BJ (cell line): ENCODE measurements at regions of chr1 and their contacts with region 1.

Region 1: DNA sequence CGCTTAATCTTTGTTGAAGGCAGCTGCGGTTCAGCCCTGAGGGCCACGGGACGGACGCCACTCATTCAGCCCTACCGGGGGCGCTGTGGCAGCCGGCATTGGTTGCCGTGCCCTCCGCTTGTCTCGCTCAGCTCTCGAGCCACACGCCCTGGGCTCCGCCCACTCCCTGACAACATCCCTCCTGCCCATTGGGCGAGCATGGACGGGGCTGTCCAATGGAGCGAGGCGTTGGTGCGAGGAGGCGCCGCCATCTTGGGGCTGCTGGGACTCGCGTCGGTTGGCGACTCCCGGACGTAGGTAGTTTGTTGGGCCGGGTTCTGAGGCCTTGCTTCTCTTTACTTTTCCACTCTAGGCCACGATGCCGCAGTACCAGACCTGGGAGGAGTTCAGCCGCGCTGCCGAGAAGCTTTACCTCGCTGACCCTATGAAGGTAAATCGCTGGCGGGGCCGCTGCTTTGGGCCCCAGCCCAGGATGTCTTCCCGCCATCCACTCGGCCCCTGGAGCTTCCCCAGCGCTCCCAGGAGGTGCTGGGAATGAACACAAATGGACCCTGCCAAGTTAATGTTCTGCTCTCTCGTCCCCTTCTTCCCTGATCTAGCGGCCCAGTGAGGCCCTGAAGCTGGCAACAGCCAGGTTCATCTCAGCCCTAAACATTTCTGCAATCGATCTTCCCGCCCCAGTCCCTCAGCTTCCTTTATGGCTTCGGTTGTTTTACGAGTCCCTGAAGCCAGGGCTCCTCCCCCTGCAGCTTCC is at the start of gene SRP9:
- DNase-seq: peak; percentile 88
- H3K4me3 ChIP-seq: peak within 1 kb of the TSS; percentile 87
- H3K27me3 ChIP-seq: no peaks in the 10 kb centered on the region
- CTCF ChIP-seq: peak; percentile 96
- polyA plus RNA-seq, gene SRP9: 250 and 272 TPM in 2 replicates

Region 2: DNA sequence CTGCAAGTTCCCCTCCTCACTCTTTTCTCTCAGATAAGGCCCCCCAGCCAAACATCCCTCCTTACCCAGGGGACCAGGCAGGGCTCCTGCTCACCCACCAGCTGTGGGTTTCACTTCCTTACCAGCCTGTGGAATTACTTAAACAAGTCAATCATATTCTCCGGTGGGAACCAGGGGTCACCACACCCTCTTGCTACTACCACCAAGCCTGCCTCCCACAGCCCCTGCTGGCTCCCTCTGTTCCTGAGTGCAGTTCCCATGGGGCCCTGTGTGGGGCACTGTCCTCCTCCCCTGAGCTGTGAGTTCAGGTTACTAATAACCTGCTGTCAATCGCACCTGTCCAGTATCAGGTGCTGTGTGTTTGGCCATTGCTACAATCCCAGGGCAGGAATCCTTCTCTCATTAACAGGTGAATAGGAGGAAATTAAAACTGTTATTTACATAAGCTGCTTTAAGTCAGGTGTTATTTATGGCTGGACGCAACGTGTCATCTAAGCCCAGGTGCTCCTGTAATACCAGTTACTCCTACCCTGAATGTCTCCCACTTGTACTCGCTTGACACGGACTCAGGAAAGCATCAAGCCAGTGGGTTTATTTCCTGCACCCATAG is 296.8 kb before region 1 on chr1:
- CTCF ChIA-PET with region 1: interaction called, 231 read pairs
- POLR2A ChIA-PET with region 1: interaction called, 3 read pairs
- DNase-seq: no peak
- H3K4me3 ChIP-seq: no peak overlapping the region
- H3K27me3 ChIP-seq: no peaks in the 10 kb centered on the region
- CTCF ChIP-seq: peak; percentile 80

Region 3: GRCh38 chr1:225766967-225767633 is 10.7 kb before region 1 on chr1:
- CTCF ChIA-PET with region 1: interaction called, 20 read pairs
- POLR2A ChIA-PET with region 1: interaction called, 11 read pairs
- DNase-seq: peak; percentile 69
- H3K4me3 ChIP-seq: no peak overlapping the region
- H3K27me3 ChIP-seq: no peaks in the 10 kb centered on the region
- CTCF ChIP-seq: no peak

Region 4: DNA sequence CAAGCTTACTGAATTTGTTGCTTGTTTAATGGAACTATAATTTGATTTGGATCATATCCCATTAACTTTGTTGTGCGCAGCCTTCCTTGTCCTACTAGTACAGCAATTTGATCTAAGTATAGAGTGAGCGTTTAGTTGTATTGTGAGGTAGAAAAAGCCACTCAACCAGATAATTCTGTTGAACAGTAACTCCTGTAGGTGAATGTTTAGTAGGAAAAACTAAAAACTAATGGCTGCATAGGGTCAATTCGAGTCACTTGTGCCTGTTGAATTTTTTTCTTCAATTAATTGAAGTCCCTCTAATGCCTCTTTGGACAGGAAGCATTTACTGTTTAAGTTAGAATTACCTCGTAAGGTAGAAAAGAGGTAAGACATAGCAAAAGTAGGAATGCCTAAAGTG is 17.2 kb after region 1 on chr1:
- CTCF ChIA-PET with region 1: interaction called, 11 read pairs
- POLR2A ChIA-PET with region 1: no interaction called
- DNase-seq: no peak
- H3K4me3 ChIP-seq: no peak overlapping the region
- H3K27me3 ChIP-seq: no peaks in the 10 kb centered on the region
- CTCF ChIP-seq: no peak

Region 5: DNA sequence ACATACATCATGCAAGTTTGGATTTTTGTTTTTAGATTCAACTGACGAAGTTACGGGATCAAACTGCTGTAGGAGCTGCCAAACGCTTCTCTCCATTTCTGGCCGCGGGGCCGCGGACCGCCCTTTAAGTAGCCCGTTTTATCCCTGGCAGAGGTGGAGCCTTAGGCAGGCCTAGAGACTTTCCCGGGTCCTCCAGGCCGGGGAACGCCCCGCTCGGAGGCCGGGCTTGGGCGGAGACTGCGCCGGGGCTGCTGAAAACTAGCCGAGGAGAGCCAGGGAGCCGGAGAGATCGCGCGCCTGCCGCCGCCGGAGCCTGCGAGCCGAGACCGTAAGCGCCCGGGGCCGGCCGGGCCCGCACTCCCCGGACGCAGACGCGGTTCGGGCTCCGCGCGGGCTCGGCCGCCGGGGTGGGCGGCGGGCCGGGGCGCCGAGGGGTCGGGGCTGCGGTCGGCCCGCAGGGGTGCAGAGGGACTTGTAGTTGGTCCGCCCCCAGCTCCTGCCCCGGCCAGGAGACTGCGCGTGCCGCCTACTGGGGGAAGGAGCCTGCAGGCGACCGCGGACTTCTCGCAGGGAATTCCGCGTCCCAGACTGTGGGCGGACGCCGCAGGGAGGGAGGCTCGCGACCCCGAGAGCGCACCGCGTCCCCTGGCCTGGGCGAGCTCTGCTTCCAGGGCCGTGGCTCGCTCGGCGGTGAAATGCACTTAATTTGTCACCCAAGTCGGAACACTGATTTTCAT is 32.2 kb after region 1 on chr1 and contains the start of gene EPHX1:
- CTCF ChIA-PET with region 1: interaction called, 10 read pairs
- POLR2A ChIA-PET with region 1: no interaction called
- DNase-seq: peak; percentile 32
- H3K4me3 ChIP-seq: peak within 1 kb of the TSS; percentile 73
- H3K27me3 ChIP-seq: no peaks in the 10 kb centered on the region
- CTCF ChIP-seq: peak; percentile 59
- polyA plus RNA-seq, gene EPHX1: 17.9 and 34.3 TPM in 2 replicates

Region 6: GRCh38 chr1:225845571-225846259 is 68.0 kb after region 1 on chr1:
- CTCF ChIA-PET with region 1: interaction called, 12 read pairs
- POLR2A ChIA-PET with region 1: no interaction called
- DNase-seq: no peak
- H3K4me3 ChIP-seq: no peak overlapping the region
- H3K27me3 ChIP-seq: no peaks in the 10 kb centered on the region
- CTCF ChIP-seq: peak; percentile 87